Mammary epithelial cell (primary cell): ENCODE measurements at regions of chr3 and their contacts with region 1.

Region 1: DNA sequence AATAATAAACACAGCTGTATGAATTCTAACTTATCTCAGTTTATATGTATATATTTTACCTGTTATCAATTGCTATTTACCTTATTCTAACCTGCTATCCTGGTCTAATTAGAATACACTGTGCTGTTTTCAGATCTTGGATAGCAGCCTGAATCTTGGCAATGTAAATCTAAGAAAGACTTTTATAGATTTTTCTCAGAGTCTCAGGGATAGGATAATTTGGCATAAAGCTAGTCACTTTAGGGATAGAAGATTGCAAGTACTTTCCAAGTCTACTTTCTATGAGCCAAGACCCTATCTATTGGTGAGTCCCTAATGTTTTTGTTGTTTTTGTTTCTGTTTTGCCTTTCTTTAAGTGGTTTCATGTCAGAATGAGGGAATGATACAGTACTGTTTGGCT is 695.7 kb downstream of the NAALADL2 start:
- DNase-seq: no peak
- H3K4me3 ChIP-seq: no peak overlapping the region
- H3K27ac ChIP-seq: no peak overlapping the region
- H3K4me1 ChIP-seq: no peaks in the 10 kb centered on the region
- H3K27me3 ChIP-seq: no peaks in the 10 kb centered on the region
- CTCF ChIP-seq: no peak

Region 2: GRCh38 chr3:175535342-175535741 is 19.5 kb before region 1 on chr3:
- CTCF ChIA-PET with region 1: no interaction called
- dilution Hi-C with region 1: no loop called
- in situ Hi-C with region 1: no loop called
- intact Hi-C with region 1: no loop called
- DNase-seq: peak; percentile 1
- H3K4me3 ChIP-seq: no peak overlapping the region
- H3K27ac ChIP-seq: no peak overlapping the region
- H3K4me1 ChIP-seq: no peaks in the 10 kb centered on the region
- H3K27me3 ChIP-seq: peaks cover 2% of the 10 kb centered on the region
- CTCF ChIP-seq: no peak

Region 3: DNA sequence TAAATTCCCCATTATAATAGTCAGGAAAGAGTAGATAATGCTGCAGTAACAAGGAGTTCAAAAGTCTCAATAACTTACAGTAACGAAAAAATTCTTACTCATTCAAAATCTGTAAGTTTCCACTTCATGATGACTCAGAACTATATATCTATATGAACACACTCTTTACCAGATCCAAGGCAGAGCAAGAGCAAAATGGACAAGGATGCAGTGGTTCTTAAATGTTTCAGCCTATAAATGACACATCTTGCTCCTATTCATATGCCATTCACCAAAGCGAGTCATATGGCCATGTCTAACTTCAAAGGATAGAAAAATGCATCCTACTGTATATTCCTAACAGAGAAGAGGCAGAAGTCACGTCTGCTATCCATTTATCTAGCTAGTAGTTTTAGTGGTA is 92.1 kb after region 1 on chr3:
- CTCF ChIA-PET with region 1: no interaction called
- dilution Hi-C with region 1: no loop called
- in situ Hi-C with region 1: no loop called
- intact Hi-C with region 1: loop called (anchors 10 kb)
- DNase-seq: no peak
- H3K4me3 ChIP-seq: no peak overlapping the region
- H3K27ac ChIP-seq: no peak overlapping the region
- H3K4me1 ChIP-seq: no peaks in the 10 kb centered on the region
- H3K27me3 ChIP-seq: no peaks in the 10 kb centered on the region
- CTCF ChIP-seq: no peak